ENCODE measurements at regions of chr1 and their contacts with region 1.

Region 1: GRCh38 chr1:40783001-40783905 is at the start of gene KCNQ4:
- DNase-seq: no peak
- ATAC-seq: peak; percentile 16; the same call in 2 of the 3 replicates
- H3K4me3 ChIP-seq: peak within 1 kb of the TSS; percentile 43 to 71 (median 48); a peak in 4 of 6 replicates
- H3K27ac ChIP-seq: no peak within 1 kb of the TSS
- H3K4me1 ChIP-seq: peaks cover 45% of the 10 kb centered on the region
- H3K27me3 ChIP-seq: peaks cover 0 to 3% of the 10 kb centered on the region in 2 experiments; a peak in 2 of 5 replicates
- CTCF ChIP-seq: no peak
- EP300 ChIP-seq: no peak
- POLR2A ChIP-seq: no peak
- RAD21 ChIP-seq: no peak
- total RNA-seq, gene KCNQ4: 0.02 TPM in 1 of 2 replicates, not detected in the other

Region 2: GRCh38 chr1:40612345-40612831 is 170.9 kb before region 1 on chr1:
- CTCF ChIA-PET with region 1: no interaction called
- POLR2A ChIA-PET with region 1: no interaction called
- in situ Hi-C with region 1: no loop called
- intact Hi-C with region 1: loop called (anchors 10 kb)
- DNase-seq: peak; percentile 55
- ATAC-seq: peak; percentile 95
- H3K4me3 ChIP-seq: peak overlapping the region in 1 of 3 experiments; percentile 40; a peak in 1 of 6 replicates
- H3K27ac ChIP-seq: no peak overlapping the region
- H3K4me1 ChIP-seq: peaks cover 5% of the 10 kb centered on the region; the same call in 1 of the 2 replicates
- H3K27me3 ChIP-seq: peaks cover 0 to 3% of the 10 kb centered on the region in 2 experiments; a peak in 1 of 5 replicates
- CTCF ChIP-seq: peak; percentile 93
- EP300 ChIP-seq: no peak
- POLR2A ChIP-seq: no peak
- RAD21 ChIP-seq: peak; percentile 74

Region 3: GRCh38 chr1:40818264-40818961 is 35.2 kb after region 1 on chr1:
- CTCF ChIA-PET with region 1: no interaction called
- POLR2A ChIA-PET with region 1: no interaction called
- in situ Hi-C with region 1: no loop called
- intact Hi-C with region 1: no loop called
- DNase-seq: no peak
- ATAC-seq: no peak
- H3K4me3 ChIP-seq: no peak overlapping the region
- H3K27ac ChIP-seq: no peak overlapping the region
- H3K4me1 ChIP-seq: peaks cover 8% of the 10 kb centered on the region
- H3K27me3 ChIP-seq: peaks cover 0 to 8% of the 10 kb centered on the region in 2 experiments; a peak in 3 of 5 replicates
- CTCF ChIP-seq: no peak
- EP300 ChIP-seq: no peak
- POLR2A ChIP-seq: no peak
- RAD21 ChIP-seq: no peak

Region 4: GRCh38 chr1:41184451-41184850 is 401.2 kb after region 1 on chr1:
- CTCF ChIA-PET with region 1: no interaction called
- POLR2A ChIA-PET with region 1: no interaction called
- in situ Hi-C with region 1: no loop called
- intact Hi-C with region 1: no loop called
- DNase-seq: no peak
- ATAC-seq: no peak
- H3K4me3 ChIP-seq: no peak overlapping the region
- H3K27ac ChIP-seq: no peak overlapping the region
- H3K4me1 ChIP-seq: no peaks in the 10 kb centered on the region
- H3K27me3 ChIP-seq: no peaks in the 10 kb centered on the region
- CTCF ChIP-seq: no peak
- EP300 ChIP-seq: no peak
- POLR2A ChIP-seq: no peak
- RAD21 ChIP-seq: no peak

Measured in HepG2 (cell line).